ENCODE measurements at regions of chr7 and their contacts with region 1.

Region 1: DNA sequence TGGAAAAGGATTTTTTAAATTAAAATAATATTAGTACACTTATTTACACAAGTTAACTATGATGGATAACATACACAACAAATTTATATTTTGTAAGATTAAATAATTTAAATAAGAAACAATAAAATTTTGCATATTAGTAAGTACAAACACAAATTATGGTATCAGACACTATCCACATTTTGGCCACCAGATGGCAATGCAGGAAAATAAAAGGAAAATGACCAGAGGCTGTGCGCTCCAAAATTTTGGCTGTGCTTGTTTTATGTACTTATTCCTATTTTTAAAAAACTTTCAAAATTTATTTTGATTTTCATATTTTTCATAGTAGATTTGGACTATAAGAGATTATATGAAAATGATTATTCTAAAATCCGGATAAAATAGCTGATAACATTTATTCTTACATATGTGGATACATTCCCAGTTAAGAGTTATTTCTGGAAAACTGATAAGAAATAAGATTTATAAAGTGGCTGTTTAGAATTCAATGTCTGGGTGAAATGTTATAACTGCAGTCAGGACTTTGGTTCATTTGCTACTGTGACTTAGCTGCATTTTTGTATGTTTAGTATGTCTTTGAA is 274.7 kb upstream of the HGF start:
- DNase-seq: no peak

Region 2: GRCh38 chr7:82481499-82482097 is 437.0 kb after region 1 on chr7:
- intact Hi-C with region 1: loop called (anchors 10 kb)
- DNase-seq: no peak

Region 3: DNA sequence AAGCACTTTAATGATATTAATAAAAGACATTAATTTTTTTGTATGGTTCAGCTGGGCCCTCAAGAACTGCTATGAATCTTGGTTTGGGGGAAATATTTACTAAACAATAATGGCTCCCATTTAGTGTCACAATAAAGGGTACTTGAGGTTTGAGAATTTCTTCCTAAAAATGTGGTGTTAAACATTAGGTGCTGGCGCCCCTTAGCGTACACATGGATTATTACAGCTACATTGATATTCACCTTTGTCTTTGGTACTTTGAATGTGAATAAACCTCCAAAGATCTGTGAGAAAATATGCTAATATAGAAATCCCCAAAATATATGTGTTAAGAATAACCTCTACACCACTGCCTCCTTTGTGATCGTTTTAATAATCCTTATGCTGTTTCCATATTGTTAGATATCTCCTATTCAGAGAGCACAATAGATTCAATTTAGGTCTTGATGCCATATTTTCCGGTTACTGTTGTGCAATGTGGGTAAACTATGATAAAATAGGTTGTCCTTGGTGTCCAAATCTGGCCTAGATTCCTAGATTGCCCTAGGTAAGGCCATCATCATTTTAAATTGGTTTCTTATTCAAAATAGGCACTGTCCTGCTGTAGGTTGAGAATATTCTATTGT is 560.8 kb after region 1 on chr7:
- intact Hi-C with region 1: loop called (anchors 10 kb)
- DNase-seq: no peak

Region 4: DNA sequence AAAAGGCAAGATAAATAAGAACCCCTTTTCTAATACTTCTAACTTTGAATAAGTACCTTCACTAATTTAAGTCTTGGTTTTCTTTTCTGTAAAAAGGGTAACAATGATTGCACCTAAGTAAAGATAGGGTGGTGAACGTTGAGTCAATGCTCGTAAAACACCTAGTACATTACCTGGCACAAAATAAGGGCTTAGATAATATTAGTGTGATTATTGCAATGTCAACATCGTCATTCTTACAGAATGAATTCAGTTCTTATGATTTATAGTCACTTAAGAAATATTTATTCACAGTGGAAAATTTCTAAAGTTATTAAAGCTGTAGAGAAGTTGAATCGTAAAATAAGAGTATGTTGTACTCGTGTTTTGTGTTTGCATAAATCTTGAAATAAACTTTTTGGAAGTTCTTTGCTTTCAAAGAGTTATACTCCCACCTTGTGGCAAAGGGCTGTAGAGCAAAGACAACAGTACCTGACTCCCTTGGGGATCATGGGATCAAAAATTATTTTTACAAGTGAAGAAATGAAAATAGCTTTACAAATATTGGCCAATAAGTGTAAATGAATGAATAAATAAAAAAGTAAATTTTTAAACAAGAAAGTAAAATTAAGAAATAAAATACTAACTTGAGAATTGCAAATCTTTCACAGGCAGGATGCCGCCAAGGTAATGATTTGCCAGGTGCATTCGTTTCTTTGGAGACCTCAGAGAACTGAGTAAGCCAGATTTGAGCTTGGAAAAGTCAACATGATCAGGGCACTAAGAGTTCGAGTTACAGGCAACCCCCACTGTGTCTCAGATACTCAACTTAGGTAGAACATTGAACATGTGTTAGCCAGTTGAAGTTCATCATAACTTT is 684.8 kb after region 1 on chr7:
- intact Hi-C with region 1: loop called (anchors 10 kb)
- DNase-seq: no peak